Activated B cell treated with CpG ODN at 0.5 μM for 24 hours (primary cell): ENCODE measurements at regions of chr1 and their contacts with region 1.

Region 1: GRCh38 chr1:35192853-35193664 is at the start of gene SFPQ:
- DNase-seq: peak; percentile 95
- ATAC-seq: peak; percentile 91
- H3K4me3 Mint-ChIP-seq: peak within 1 kb of the TSS; percentile 95
- H3K27ac Mint-ChIP-seq: peak within 1 kb of the TSS; percentile 98
- H3K4me1 Mint-ChIP-seq: peaks cover 39% of the 10 kb centered on the region
- H3K27me3 Mint-ChIP-seq: no peaks in the 10 kb centered on the region
- CTCF ChIP-seq: no peak
- total RNA-seq, gene SFPQ: 380 and 429 TPM in 2 replicates

Region 2: DNA sequence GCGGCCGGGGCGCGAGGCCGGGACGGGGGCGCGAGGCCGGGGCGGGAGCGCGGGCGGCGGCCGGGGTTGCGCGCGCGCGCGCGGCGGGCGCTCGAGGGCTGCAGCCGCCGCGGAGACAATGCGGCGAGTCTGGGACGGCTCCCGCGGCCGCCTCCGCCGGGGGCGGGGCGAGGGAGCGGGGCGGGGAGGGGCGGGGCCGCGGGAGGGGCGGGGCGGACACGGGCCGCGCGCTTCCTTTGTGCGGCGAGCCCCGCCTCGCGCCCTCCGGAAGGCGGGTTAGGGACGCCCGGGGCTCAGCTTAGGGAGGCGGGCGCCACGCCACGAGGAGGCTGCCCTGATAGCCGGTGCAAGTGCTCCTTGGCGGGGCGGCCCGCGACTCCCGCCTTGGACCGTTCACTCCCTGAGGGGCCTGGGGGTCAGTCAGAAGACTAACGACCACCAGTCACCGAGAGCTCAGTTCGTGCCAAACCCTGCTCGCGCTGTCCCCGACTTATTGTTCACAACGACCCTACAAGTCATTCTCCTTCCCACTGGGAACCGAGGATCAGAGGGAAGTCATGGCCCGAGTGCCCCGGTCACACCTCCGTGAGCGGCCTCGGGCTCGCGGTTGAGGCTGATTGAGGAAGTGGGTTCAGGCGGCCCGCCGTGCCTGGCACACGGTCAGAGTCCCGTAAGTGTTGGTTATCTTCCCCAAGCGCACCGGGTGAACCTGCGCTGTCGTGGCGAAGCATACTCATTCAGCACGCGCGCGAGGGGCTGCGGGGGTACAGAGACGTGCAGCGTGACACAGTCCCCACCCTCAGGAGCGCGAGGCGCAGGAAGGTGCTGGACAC is 1843.1 kb before region 1 on chr1:
- CTCF ChIA-PET with region 1: no interaction called
- POLR2A ChIA-PET with region 1: no interaction called
- intact Hi-C with region 1: loop called (anchors 5 kb)
- DNase-seq: peak; percentile 77
- ATAC-seq: peak; percentile 88
- H3K4me3 Mint-ChIP-seq: peak overlapping the region; percentile 91
- H3K27ac Mint-ChIP-seq: peak overlapping the region; percentile 93
- H3K4me1 Mint-ChIP-seq: peaks cover 37% of the 10 kb centered on the region
- H3K27me3 Mint-ChIP-seq: no peaks in the 10 kb centered on the region
- CTCF ChIP-seq: no peak

Region 3: DNA sequence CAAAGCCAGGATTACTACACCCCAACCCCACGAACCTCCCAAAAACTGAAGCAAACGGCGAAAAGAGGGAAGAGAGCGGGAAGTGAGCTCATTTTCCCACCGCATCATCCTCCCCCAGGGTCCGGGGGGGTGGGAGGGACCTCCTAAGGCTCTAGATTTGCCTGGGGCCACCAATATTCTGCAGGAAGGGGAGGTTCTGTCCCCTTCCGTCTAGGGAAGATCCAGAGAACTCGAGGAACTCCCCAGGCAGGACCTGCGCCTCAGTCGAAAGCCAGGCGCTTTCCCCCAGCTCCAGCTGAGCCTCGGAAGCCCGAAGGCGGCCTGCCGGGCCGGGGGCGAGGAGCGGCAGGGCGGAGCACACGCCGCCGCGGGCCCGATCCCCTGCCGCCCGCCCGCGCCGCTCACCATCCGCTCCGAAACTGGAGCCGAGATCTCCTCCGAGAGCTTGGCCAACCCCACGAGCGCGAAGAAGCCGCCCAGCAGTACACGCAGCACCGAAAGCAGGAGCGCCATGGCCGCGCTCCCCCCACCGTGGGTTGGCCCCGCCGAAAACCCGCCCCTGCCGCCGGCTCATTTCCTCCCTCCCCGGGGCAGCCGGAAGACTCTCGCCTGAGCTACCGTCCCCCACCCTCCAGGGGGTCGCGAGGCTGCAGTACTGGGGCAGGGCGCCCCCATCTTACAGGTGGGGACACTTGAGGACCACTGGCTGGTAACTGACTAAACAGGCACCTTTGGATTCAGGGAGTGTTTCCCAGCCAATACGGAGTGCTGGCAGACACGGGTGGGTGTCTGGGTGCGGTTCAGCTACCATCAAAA is 208.1 kb before region 1 on chr1 and contains the start of gene TMEM35B:
- CTCF ChIA-PET with region 1: no interaction called
- POLR2A ChIA-PET with region 1: interaction called, 9 read pairs
- intact Hi-C with region 1: loop called (anchors 2 kb)
- DNase-seq: peak; percentile 74
- ATAC-seq: peak; percentile 87
- H3K4me3 Mint-ChIP-seq: peak within 1 kb of the TSS; percentile 97
- H3K27ac Mint-ChIP-seq: peak within 1 kb of the TSS; percentile 89
- H3K4me1 Mint-ChIP-seq: peaks cover 43% of the 10 kb centered on the region
- H3K27me3 Mint-ChIP-seq: no peaks in the 10 kb centered on the region
- CTCF ChIP-seq: no peak
- total RNA-seq, gene TMEM35B: 16.7 and 20.0 TPM in 2 replicates

Region 4: DNA sequence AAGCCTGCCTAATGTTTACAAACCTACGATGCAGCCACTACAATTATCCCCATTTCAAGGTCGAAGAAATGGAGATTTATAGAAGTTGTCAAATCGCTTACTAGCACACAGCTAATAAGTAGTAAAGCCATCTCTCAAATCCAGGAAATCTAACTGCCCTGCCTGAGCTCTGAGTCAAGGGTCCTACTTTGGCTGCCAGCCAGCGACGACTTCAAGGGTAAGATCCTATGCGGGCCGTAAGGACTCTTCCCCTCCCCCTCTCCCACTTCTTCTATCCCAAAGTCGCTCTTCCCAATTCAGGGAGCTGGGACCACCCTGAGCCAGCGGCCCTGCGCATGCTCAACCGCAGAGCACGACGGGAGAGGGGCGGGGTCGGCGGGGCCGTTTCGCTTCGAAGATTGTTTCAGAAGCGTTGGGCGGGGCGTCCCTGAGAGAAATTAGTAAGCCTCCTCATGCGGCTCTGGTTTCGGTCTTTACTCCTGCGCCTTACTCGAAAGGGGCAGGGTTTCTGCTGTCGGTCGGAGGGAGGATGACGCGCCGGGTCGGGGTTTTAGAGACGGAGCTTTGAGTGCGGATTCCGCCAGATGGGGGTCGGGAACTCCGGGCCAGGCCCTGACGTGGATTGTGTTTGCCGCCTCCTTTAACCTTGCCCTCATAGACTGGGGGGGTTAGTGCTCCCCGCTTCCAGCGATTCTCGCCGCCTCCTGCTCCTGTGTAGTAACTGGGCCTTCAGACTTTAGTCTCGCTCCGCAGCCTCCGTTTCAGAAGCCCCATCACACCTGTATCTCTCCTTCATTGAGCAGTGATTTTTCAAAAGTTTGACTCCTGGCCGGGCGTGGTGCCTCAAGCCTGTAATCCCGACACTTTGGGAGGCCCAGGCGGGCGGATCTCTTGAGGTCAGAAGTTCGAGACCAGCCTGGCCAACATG is 113.8 kb before region 1 on chr1 and contains the start of gene ZMYM1:
- CTCF ChIA-PET with region 1: no interaction called
- POLR2A ChIA-PET with region 1: interaction called, 14 read pairs
- intact Hi-C with region 1: loop called (anchors 1 kb)
- DNase-seq: peak; percentile 88
- ATAC-seq: peak; percentile 96
- H3K4me3 Mint-ChIP-seq: peak within 1 kb of the TSS; percentile 95
- H3K27ac Mint-ChIP-seq: peak within 1 kb of the TSS; percentile 98
- H3K4me1 Mint-ChIP-seq: peaks cover 21% of the 10 kb centered on the region
- H3K27me3 Mint-ChIP-seq: peaks cover 4% of the 10 kb centered on the region
- CTCF ChIP-seq: no peak
- total RNA-seq, gene ZMYM1: 7.4 and 9.0 TPM in 2 replicates

Region 5: DNA sequence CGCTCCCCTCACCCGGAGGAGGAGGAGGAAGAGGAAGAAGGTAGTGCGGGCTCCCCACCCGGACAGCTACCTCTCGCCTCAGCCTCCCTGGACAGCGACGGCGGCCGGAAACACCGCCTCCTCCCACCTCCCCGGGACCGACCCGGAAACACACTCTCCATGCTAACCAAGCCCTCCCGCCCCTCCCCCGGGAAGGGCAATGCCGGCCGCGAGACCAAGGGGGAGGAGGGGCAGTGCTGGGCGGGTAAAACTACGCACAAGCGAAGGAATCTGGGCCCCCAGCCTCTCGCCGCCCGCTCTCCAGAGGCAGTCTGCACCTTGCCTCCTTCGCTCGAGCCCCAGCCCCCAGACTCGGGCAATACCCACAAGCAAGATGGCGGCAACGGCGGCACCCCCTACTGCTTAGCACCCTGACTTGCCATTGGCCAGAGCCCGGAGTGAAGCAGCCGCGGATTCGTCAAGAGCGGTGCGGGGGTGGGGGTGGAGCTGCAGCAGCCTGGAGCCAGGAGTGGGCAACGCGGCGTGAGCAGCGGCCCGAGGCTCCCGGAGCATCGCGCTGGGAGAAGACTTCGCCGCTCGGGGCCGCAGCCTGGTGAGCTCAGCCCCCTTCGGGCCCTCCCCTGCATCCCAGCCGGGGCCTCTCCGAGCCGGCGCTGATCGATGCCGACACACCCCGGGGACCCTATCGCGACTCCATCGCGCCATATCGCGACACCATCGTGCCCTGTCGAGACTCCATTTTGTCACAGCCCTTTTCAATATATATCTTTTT is 364.4 kb after region 1 on chr1 and contains the starts of genes KIAA0319L and NCDN:
- CTCF ChIA-PET with region 1: no interaction called
- POLR2A ChIA-PET with region 1: no interaction called
- intact Hi-C with region 1: loop called (anchors 2 kb)
- DNase-seq: peak; percentile 87
- ATAC-seq: peak; percentile 94
- H3K4me3 Mint-ChIP-seq: peak within 1 kb of the TSS; percentile 96
- H3K27ac Mint-ChIP-seq: peak within 1 kb of the TSS; percentile 96
- H3K4me1 Mint-ChIP-seq: peaks cover 32% of the 10 kb centered on the region
- H3K27me3 Mint-ChIP-seq: no peaks in the 10 kb centered on the region
- CTCF ChIP-seq: no peak
- total RNA-seq, gene KIAA0319L: 43.3 and 59.1 TPM in 2 replicates
- total RNA-seq, gene NCDN: 15.2 and 18.4 TPM in 2 replicates